ENCODE measurements at regions of chr1 and their contacts with region 1.

Region 1: DNA sequence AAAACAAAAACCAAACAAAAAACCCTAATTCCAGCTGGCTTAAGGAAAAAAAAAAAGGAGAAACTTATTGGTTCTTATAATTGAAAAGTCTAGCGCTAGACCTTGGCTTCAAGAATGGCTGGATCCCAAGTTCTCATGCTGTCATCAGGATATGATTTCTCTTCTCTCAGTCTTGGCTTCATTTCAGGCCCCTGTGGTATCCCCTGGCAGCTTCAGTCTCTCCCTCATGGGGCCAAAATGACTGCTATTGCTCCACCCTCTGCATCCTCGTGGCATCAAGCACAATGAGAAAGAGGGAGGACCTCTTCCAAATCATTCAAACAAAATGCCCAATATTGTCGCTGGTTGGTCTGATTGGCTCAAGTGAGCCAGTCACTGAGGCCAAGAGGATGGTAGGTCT is 80.7 kb downstream of the GIPC2 start:
- DNase-seq: no peak
- H3K4me3 ChIP-seq: no peak overlapping the region
- H3K27ac ChIP-seq: no peak overlapping the region
- H3K4me1 ChIP-seq: no peaks in the 10 kb centered on the region
- H3K27me3 ChIP-seq: no peaks in the 10 kb centered on the region
- CTCF ChIP-seq: no peak
- POLR2A ChIP-seq: no peak

Region 2: GRCh38 chr1:78676347-78676982 is 550.0 kb after region 1 on chr1:
- CTCF ChIA-PET with region 1: interaction called, 4 read pairs
- POLR2A ChIA-PET with region 1: no interaction called
- dilution Hi-C with region 1: no loop called
- intact Hi-C with region 1: loop called (anchors 2 kb)
- DNase-seq: peak; percentile 70
- H3K4me3 ChIP-seq: no peak overlapping the region
- H3K27ac ChIP-seq: no peak overlapping the region
- H3K4me1 ChIP-seq: no peaks in the 10 kb centered on the region
- H3K27me3 ChIP-seq: peaks cover 0 to 3% of the 10 kb centered on the region in 2 experiments
- CTCF ChIP-seq: peak; percentile 55 to 58
- POLR2A ChIP-seq: no peak